Upper lobe of right lung (tissue), 1 donor: ENCODE measurements at regions of chr19 and their contacts with region 1.

Region 1: DNA sequence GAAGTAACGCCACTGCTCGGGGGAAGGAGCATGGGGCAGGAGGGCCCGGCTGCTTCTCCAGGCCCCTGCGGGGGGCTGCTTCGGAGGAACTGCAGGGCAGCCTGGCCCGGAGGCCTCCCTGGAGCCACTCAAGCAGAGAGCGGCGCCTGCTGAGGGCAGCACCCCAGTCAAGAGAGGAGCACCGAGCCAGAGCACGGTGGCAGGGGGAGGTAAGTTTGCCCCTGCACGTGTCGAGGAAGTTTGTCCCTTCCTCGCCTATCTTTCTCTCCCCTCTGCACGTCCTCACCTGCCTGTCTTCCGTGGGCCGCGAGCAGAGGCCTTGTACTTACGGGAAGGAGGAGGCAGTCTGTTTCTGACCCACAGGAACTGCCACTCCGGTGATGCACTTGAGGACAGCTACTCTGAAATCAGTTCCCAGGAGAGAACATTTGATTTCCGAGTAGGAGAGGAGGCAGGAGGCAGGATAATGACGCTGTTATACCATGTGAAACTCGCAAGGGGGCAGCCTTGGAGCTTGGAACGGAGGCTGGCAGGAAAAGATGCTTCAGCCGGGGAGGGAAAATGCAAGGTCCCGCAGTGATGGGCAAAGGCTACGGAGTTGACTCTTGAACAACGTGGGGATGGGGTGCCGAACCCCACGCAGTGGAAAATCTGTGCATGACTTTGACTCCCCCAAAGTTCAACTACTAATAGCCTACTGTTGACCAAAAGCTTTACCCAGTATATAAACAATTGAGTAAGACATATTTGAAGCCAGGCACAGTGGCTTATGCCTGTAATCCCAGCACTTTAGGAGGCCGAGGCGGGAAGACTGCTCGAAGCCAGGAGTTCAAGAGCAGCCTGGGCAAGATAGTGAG is 5.0 kb downstream of the FFAR1 start:
- DNase-seq: peak; percentile 76
- ATAC-seq: peak; percentile 86
- H3K4me3 ChIP-seq: no peak overlapping the region
- H3K27ac ChIP-seq: no peak overlapping the region
- H3K4me1 ChIP-seq: peaks cover under 1% of the 10 kb centered on the region
- H3K27me3 ChIP-seq: no peaks in the 10 kb centered on the region
- CTCF ChIP-seq: peak; percentile 82

Region 2: DNA sequence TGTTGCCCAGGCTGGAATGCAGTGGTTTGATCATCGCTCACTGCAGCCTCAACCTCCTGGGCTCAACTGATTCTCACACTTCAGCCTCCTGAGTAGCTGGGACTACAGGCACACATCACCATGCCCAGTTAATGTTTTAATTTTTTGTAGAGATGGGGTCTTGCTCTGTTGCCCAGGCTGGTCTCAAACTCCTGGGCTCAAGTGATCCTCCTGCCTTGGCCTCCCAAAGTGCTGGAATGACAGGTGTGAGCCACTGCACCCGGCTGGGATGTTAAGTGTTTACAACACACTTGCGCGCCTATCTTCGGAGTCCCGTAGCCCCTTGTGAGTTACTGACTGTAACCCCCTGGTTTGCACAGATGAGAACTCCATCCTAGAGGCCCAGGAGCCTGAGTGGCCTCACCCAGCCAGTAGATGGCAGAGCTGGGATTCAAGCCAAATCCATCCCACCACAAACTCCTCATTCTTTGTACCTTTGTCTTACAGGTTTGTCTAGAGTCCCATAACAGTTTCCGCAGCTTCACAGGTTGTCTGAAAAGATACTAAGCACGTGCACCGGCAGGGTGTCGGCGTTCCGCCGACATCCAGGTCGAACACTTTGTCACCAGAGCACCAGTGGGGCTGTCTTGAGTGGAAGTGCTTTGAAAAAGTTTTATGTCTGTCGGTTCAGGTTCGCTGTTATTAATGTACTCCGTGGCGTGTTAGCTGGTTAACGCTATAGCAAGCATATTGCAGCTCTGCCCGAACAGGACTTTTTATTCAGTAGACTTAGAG is 46.0 kb before region 1 on chr19:
- intact Hi-C with region 1: no loop called
- DNase-seq: no peak
- ATAC-seq: no peak
- H3K4me3 ChIP-seq: no peak overlapping the region
- H3K27ac ChIP-seq: no peak overlapping the region
- H3K4me1 ChIP-seq: no peaks in the 10 kb centered on the region
- H3K27me3 ChIP-seq: no peaks in the 10 kb centered on the region
- CTCF ChIP-seq: peak; percentile 14

Region 3: DNA sequence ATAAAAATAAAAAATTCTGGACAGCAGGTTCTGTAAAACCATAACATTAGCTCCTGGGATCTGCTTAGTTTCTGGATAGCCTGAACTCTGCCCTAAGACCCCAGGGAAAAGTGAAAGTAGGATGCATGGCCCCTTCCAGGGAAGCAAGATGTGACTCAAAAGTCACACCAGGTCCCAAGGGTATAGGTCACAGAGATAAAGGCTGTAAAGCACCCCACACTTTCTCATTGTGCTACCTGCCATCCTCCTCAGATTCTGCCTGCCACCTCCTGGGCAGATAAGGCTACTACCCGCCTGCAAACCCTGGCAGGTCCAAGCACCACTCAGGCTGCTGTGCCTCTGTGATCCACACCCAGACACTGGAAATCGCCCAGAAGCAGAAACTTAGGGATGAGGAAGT is 116.0 kb after region 1 on chr19:
- intact Hi-C with region 1: loop called (anchors 10 kb)
- DNase-seq: peak; percentile 74
- ATAC-seq: peak; percentile 96
- H3K4me3 ChIP-seq: no peak overlapping the region
- H3K27ac ChIP-seq: no peak overlapping the region
- H3K4me1 ChIP-seq: no peaks in the 10 kb centered on the region
- H3K27me3 ChIP-seq: no peaks in the 10 kb centered on the region
- CTCF ChIP-seq: peak; percentile 68

Region 4: DNA sequence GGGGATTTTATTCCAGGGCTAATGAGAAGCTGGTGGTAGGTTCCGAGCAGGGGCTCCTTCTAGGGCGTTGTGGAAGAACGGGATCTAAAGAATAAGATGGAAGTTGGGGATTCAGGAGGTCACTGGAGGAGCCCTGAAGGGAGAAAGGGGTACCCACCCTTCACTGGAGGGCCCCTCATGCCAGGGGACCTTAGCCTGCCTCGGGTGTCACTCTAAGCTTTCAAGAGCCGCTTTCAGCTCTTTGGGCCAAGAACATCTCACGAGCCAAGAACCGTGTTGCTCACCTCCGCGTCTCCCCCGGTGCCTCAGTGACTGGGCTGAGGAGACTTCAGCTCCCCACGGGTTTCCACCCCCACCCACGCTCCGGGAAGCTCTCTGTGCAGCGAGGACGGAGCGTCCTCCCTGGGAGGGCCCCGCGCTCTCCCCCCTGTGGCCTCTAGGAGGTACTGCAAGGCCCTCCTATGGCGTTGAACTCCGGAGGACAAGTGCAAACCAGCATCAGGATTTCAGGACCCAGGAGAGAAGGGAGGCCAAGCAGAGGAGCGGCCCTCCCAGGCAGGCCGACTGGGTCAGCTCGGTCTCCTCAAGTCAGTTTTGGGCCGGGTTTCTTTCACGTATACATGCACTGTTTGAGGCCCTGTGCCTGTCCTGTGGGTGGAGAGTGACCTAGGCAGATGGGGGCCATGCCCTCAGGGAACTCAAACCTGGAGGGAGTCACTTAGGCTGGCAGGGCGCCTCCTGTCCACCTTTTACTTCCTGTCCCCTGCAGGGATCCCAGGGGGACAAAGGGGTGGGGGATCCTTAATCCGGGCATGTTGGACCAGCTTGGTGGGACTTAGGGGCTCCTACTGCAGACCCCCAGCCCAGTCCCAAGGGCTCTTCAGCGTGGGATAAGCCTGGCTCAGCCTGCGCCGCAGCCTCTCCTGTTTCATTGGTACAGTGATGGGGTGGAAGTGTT is 142.7 kb after region 1 on chr19:
- intact Hi-C with region 1: loop called (anchors 10 kb)
- DNase-seq: peak; percentile 86
- ATAC-seq: peak; percentile 98
- H3K4me3 ChIP-seq: no peak overlapping the region
- H3K27ac ChIP-seq: no peak overlapping the region
- H3K4me1 ChIP-seq: peaks cover 3% of the 10 kb centered on the region
- H3K27me3 ChIP-seq: peaks cover 8% of the 10 kb centered on the region
- CTCF ChIP-seq: peak; percentile 98